Caco-2 (cell line): ENCODE measurements at regions of chr3 and their contacts with region 1.

Region 1: GRCh38 chr3:152071924-152072323 is 196.8 kb upstream of the MBNL1 start:
- DNase-seq: peak in 1 of 2 experiments; percentile 14
- H3K4me3 ChIP-seq: no peak overlapping the region
- H3K4me3 Mint-ChIP-seq: no peak overlapping the region
- H3K27ac Mint-ChIP-seq: no peak overlapping the region
- H3K4me1 ChIP-seq: no peaks in the 10 kb centered on the region
- H3K4me1 Mint-ChIP-seq: no peaks in the 10 kb centered on the region
- H3K27me3 ChIP-seq: no peaks in the 10 kb centered on the region
- H3K27me3 Mint-ChIP-seq: no peaks in the 10 kb centered on the region
- CTCF ChIP-seq: peak; percentile 18 to 32

Region 2: DNA sequence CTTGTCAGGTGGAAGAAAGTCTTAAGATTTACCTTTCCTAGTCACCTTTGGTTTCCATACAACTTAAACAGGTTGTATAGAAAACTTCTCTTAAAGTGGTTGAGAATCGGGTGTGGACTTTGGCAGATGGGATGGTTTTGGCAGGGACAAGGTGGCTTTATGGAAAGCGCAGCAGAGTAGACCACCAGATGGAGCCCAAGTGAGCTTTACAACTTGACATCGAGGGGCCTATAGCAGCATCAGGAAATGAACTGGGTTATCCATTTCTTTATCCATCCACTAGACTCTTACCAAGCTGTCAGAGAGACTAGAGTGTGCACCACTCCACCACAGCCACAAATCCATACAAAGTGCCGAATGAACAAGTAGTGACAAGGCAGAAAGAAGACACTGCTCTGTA is 111.5 kb after region 1 on chr3:
- CTCF ChIA-PET with region 1: no interaction called
- POLR2A ChIA-PET with region 1: no interaction called
- intact Hi-C with region 1: loop called (anchors 10 kb)
- DNase-seq: peak; percentile 53 to 55
- H3K4me3 ChIP-seq: no peak overlapping the region
- H3K4me3 Mint-ChIP-seq: no peak overlapping the region
- H3K27ac Mint-ChIP-seq: no peak overlapping the region
- H3K4me1 ChIP-seq: no peaks in the 10 kb centered on the region
- H3K4me1 Mint-ChIP-seq: no peaks in the 10 kb centered on the region
- H3K27me3 ChIP-seq: no peaks in the 10 kb centered on the region
- H3K27me3 Mint-ChIP-seq: no peaks in the 10 kb centered on the region
- CTCF ChIP-seq: peak; percentile 34 to 71

Region 3: DNA sequence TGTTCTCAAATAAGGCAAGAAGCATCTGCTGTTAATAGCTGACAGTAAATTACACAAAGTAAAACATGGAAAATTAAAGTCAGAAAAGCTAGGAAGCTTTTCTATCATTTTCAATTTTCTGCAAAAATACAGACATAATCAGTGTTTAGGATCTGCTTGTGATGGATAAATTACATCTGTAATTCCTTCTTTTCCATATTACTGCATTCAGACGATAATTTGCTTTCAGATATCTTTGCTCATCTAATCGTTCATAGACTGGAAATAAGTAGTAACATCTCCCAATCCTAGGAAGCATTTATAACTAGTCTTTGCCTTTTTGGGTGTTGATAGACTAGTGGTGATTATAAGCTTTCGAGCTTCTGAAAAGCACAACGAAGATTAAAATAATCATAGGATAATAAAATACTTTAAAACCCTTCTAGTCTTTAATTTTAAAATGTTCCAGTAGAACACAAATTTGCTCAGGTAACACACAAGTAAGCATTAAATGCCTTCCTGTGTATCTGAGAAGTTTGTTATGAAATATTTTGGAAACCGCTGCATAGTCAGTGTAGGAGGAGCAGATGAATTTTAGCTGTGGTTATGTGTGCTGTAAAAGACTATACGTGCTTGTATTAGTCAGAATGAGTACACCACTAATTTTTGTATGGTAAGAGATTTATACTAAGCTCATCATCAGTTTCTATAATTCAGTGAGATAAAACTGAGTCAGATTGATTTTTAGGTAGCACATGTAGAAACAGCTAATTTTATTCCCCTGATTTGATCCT is 237.8 kb after region 1 on chr3:
- CTCF ChIA-PET with region 1: no interaction called
- POLR2A ChIA-PET with region 1: no interaction called
- intact Hi-C with region 1: loop called (anchors 1 kb)
- DNase-seq: no peak
- H3K4me3 ChIP-seq: no peak overlapping the region
- H3K4me3 Mint-ChIP-seq: no peak overlapping the region
- H3K27ac Mint-ChIP-seq: no peak overlapping the region
- H3K4me1 ChIP-seq: peaks cover 59% of the 10 kb centered on the region
- H3K4me1 Mint-ChIP-seq: peaks cover 17% of the 10 kb centered on the region
- H3K27me3 ChIP-seq: no peaks in the 10 kb centered on the region
- H3K27me3 Mint-ChIP-seq: no peaks in the 10 kb centered on the region
- CTCF ChIP-seq: no peak